ENCODE measurements at regions of chr6 and their contacts with region 1.

Region 1: GRCh38 chr6:139250296-139251044 is 41.3 kb downstream of the TXLNB start:
- DNase-seq: peak; percentile 69
- CTCF ChIP-seq: peak; percentile 72

Region 2: DNA sequence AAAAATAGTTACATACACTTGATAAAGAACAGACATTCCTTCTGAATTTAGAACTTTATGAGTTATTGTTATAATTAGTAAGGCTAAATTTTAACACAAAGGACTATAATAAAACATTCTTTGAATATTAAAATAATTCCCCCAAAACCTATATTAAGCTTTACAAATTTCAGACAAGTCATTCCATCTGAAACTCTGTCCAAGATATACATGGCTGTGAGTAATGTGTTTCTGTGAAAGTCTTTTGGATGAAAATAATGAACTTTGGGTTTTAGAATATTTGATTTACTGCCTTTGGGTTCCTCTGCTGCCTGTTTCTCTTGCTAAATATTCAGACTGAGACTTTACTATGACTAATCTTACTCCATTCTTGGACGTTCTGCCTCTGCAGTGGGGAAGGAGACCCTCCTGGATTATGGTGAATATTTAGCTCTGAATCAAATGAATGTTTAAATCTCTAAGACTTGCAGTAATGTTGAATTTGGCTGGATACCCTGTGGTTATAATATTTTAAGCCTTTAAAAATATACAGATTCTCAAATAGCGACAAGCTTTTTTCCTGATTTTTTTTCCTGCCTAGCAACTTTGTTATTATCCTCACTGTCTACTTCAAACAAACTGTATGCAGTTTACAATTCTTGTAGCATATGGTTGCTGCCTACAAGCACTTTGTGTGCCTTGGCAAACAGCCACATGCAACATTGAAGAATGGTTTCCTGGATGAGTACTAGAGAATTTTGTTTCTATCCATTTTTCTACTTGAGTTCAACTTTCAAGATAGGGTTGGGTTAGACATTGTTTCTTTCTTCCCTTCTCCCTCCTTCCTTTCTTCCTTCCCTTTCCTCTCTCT is 10.1 kb before region 1 on chr6:
- CTCF ChIA-PET with region 1: interaction called, 15 read pairs
- POLR2A ChIA-PET with region 1: no interaction called
- DNase-seq: no peak
- CTCF ChIP-seq: no peak

Region 3: GRCh38 chr6:139262519-139263300 is 12.2 kb after region 1 on chr6:
- CTCF ChIA-PET with region 1: interaction called, 16 read pairs
- POLR2A ChIA-PET with region 1: no interaction called
- DNase-seq: peak; percentile 46
- CTCF ChIP-seq: no peak